ENCODE measurements at regions of chr5 and their contacts with region 1.

Region 1: DNA sequence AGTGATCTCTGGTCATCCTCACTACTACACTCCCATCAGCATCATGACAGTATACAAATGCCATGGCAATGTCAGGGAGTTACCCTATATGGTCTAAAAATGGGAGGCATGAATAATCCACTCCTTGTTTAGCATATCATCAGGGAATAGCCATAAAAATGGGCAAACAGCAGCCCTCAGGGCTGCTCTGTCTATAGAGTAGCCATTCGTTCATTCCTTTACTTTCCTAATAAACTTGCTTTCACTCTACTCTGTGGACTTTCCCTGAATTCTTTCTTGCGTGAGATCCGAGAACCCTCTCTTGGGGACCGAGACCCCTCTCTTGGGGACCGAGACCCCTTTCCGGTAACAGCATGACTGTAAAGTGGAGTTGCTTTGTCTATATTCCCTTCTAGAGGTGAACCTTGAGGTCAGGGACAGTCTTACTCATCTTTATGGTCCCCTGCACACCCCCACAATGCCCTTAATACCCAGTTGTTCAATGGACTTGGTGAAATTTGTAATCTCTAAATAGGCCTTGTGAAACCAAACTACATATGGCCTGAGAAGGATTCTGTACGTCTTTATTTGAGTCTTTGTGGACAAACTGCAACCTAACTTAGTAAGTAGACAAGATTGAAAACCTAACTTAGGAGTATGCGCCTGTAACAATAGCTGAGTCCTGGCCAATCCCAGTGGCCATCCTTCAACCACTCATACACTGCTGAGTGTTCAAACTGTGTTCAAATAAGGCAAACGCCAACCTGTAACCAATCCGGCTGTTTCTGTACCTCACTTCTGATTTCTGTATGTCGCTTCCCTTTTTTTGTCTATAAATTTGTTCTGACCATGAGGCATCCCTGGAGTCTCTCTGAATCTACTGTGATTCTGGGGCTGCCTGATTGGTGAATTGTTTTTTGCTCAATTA is 32.3 kb upstream of the UBTD2 start:
- DNase-seq: no peak
- H3K4me3 ChIP-seq: no peak overlapping the region; the same call in 1 of the 2 replicates
- H3K27ac ChIP-seq: peak overlapping the region; percentile 96
- H3K4me1 ChIP-seq: peaks cover 37% of the 10 kb centered on the region
- H3K27me3 ChIP-seq: no peaks in the 10 kb centered on the region
- CTCF ChIP-seq: no peak

Region 2: GRCh38 chr5:171957591-171958251 is 358.1 kb before region 1 on chr5:
- CTCF ChIA-PET with region 1: no interaction called
- POLR2A ChIA-PET with region 1: interaction called, 11 read pairs
- intact Hi-C with region 1: no loop called
- DNase-seq: no peak
- H3K4me3 ChIP-seq: no peak overlapping the region
- H3K27ac ChIP-seq: no peak overlapping the region
- H3K4me1 ChIP-seq: peaks cover 37% of the 10 kb centered on the region
- H3K27me3 ChIP-seq: no peaks in the 10 kb centered on the region
- CTCF ChIP-seq: no peak

Region 3: DNA sequence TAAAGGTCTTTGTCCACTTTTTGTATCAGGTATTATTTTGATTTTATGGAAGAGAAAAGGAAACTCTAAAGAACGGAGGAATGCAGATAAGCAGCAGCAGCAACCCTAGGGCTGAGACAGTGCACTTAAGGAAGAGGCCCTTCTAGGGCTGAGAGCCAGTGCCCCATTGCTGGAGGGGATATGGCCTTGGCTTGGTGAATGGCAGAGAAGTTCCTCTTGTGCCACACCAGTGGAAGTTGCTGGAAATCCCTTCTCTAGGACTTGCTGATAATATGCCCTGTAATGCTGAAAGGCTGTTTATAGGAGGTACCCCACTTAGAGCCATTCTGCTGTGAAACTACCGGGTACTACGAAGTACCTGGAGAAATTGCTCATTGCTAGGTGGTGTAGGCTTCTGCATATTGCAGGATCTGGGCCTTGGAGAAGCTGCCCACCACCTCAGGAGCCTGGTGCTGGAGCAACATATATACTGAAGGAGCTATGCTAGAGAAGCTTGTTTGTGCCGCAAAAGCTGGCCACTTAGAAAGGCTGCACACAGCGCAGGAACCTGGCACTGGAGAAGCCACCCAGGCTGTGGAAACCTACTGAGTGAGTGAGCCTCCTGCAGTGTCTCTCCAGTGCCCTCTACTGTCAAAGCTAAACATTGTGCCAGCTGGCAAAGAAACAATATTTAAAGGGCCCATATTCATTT is 22.6 kb before region 1 on chr5:
- CTCF ChIA-PET with region 1: interaction called, 17 read pairs
- POLR2A ChIA-PET with region 1: no interaction called
- intact Hi-C with region 1: no loop called
- DNase-seq: peak; percentile 51 to 66
- H3K4me3 ChIP-seq: no peak overlapping the region
- H3K27ac ChIP-seq: no peak overlapping the region
- H3K4me1 ChIP-seq: 0 out of 2 replicates have a peak, but pooled peaks cover 4% of the 10 kb centered on the region
- H3K27me3 ChIP-seq: no peaks in the 10 kb centered on the region
- CTCF ChIP-seq: peak; percentile 89

Region 4: GRCh38 chr5:172303572-172304335 is 12.1 kb before region 1 on chr5:
- CTCF ChIA-PET with region 1: interaction called, 4 read pairs
- POLR2A ChIA-PET with region 1: interaction called, 10 read pairs
- intact Hi-C with region 1: no loop called
- DNase-seq: peak in 1 of 2 experiments; percentile 64
- H3K4me3 ChIP-seq: peak overlapping the region; percentile 40; the same call in 1 of the 2 replicates
- H3K27ac ChIP-seq: peak overlapping the region; percentile 77
- H3K4me1 ChIP-seq: peaks cover 29% of the 10 kb centered on the region
- H3K27me3 ChIP-seq: no peaks in the 10 kb centered on the region
- CTCF ChIP-seq: no peak

Region 5: DNA sequence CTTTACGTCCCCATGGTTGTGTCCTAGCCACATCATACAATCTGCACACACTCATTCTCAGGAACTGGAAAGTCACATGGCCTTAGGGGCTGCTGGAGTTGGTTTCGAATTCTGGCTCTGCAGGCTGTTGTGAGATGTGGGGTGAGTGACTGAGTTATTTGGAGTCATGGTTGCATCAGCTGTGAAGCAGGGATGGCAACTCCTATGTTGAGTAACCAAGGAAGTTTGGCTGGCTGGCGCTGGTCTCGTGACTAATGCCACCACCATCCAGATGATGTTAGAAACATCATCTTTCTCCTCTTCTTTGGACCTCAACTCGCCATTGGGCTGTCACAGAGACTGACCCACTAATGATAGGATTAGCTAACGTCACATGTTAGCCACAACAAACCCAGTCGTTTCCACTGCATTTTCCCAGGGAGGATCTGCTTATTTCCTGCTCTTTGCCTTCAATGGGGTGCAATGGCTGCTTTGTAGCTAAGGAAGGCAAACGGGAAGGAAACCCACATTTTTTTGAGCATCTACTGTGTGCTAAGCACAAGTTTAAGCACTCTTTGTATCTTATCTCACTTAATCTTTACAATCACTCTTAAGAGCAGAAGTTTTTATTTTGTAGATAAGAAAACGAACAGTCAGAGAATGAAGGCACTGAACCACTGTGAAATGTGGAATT is 45.9 kb after region 1 on chr5:
- CTCF ChIA-PET with region 1: no interaction called
- POLR2A ChIA-PET with region 1: no interaction called
- intact Hi-C with region 1: loop called (anchors 2 kb)
- DNase-seq: peak; percentile 81 to 98
- H3K4me3 ChIP-seq: no peak overlapping the region; the same call in 1 of the 2 replicates
- H3K27ac ChIP-seq: peak overlapping the region; percentile 97
- H3K4me1 ChIP-seq: peaks cover 28% of the 10 kb centered on the region
- H3K27me3 ChIP-seq: no peaks in the 10 kb centered on the region
- CTCF ChIP-seq: no peak

Region 6: DNA sequence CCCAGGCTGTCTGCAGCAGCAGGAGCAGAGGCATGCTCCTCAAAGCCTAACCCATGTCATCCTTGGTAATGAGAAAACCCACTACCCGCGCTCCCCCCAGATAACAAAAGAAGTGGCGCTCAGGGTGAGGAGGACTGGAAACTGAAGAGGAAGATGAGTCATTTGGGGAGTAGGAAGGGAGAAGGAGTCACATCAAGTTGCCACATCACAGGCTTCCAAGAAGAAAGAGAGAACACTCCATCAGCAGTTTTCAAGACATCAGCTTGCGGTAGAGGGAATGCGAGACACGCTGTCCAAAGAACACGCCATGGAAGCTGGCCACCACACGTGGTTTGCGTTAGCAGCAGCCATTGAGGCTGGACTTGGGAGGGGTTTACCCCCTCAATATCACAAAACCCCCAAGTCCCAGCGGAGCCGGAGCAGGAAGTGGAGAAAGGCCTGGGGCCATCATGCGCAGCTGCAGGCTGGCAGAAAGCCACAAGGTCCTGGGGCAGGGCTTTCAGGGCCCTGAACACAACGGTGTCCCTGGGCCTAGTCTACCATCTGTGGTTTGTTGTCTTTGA is 97.0 kb after region 1 on chr5:
- CTCF ChIA-PET with region 1: no interaction called
- POLR2A ChIA-PET with region 1: no interaction called
- intact Hi-C with region 1: loop called (anchors 5 kb)
- DNase-seq: peak; percentile 75 to 80
- H3K4me3 ChIP-seq: no peak overlapping the region
- H3K27ac ChIP-seq: peak overlapping the region; percentile 64
- H3K4me1 ChIP-seq: peaks cover 69% of the 10 kb centered on the region
- H3K27me3 ChIP-seq: no peaks in the 10 kb centered on the region
- CTCF ChIP-seq: no peak

Region 7: GRCh38 chr5:172420240-172420943 is 104.6 kb after region 1 on chr5:
- CTCF ChIA-PET with region 1: interaction called, 10 read pairs
- POLR2A ChIA-PET with region 1: no interaction called
- intact Hi-C with region 1: no loop called
- DNase-seq: peak; percentile 90 to 91
- H3K4me3 ChIP-seq: peak overlapping the region; percentile 50
- H3K27ac ChIP-seq: peak overlapping the region; percentile 66
- H3K4me1 ChIP-seq: peaks cover 19% of the 10 kb centered on the region
- H3K27me3 ChIP-seq: no peaks in the 10 kb centered on the region
- CTCF ChIP-seq: no peak

Region 8: GRCh38 chr5:173238312-173239232 is 922.7 kb after region 1 on chr5:
- CTCF ChIA-PET with region 1: no interaction called
- POLR2A ChIA-PET with region 1: no interaction called
- intact Hi-C with region 1: no loop called
- DNase-seq: no peak
- H3K4me3 ChIP-seq: no peak overlapping the region
- H3K27ac ChIP-seq: no peak overlapping the region
- H3K4me1 ChIP-seq: no peaks in the 10 kb centered on the region
- H3K27me3 ChIP-seq: peaks cover 4% of the 10 kb centered on the region; the same call in 1 of the 2 replicates
- CTCF ChIP-seq: no peak